MCF 10A (cell line): ENCODE measurements at regions of chr15 and their contacts with region 1.

Region 1: DNA sequence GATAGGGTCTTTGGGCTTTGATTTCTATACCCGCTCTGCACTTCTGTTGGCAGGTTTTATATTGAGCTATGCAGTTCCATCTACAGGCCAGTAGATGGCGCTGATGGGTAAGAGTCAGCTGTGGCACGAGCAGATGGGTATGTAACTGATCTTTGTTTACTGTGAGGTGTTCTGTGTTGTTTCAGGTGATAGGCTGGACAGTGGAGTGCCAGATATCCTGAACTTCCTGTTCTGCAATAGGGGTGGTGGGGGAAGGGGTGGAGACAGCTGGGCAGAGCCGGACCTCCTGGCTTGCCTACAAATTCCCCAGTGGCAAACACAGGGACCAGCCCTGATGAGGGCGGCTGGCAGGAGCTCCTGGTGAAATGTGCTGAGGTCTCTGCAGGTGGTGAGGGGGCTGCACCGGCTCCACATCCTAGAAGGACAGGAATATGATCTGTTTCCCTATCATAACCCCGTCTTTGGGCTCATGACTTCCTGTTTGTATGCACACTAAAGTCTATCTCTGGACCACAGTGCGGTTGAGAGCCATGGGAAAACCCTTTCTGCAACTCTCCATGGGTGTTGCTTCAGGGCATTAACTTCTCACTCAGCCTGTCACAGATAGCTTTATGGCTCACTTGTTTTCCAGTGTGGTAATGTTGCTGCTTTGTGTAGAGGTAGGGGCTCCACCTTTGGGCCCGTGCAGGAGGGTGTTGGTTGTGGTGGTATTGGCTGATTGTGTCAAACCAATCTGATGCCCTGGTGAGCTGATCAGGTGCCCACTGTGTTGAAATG is 13.4 kb upstream of the FAM98B start:
- DNase-seq: peak; percentile 71
- H3K4me3 Mint-ChIP-seq: no peak overlapping the region
- H3K27ac Mint-ChIP-seq: no peak overlapping the region
- H3K4me1 Mint-ChIP-seq: peaks cover 6% of the 10 kb centered on the region
- H3K27me3 Mint-ChIP-seq: peaks cover 47% of the 10 kb centered on the region
- CTCF ChIP-seq: peak; percentile 89

Region 2: GRCh38 chr15:37995461-37996347 is 444.8 kb before region 1 on chr15:
- CTCF ChIA-PET with region 1: interaction called, 12 read pairs
- POLR2A ChIA-PET with region 1: no interaction called
- intact Hi-C with region 1: no loop called
- DNase-seq: peak; percentile 82
- H3K4me3 Mint-ChIP-seq: no peak overlapping the region
- H3K27ac Mint-ChIP-seq: no peak overlapping the region
- H3K4me1 Mint-ChIP-seq: peaks cover 13% of the 10 kb centered on the region
- H3K27me3 Mint-ChIP-seq: peaks cover 26% of the 10 kb centered on the region
- CTCF ChIP-seq: peak; percentile 73

Region 3: DNA sequence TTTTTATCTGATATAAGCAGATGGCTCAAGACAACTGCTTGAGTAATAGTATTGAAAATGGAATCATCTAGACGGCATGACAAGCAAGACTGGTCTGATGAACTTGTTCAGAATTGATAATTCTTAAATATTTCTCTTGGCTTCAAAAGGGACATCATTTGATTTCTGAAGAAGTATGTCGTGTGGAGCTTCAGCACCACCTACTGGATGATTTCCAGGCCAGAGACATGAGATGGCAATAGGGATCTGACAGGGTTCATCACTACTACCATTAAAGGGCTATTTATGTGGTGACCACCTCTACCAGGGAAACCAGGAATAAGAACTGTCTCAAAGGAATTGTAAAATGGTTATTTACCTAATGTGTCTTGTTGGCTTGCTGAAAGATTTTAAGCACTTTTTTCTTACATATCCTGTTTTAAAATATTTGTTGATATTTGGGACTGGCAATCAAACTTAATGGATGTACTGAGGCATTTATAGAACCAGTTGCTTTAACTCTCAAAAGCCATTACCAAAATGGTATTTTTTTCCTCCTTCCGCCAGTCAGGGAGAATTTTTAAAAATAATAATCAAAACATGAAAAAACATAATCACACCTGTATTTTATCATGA is 86.1 kb before region 1 on chr15:
- CTCF ChIA-PET with region 1: no interaction called
- POLR2A ChIA-PET with region 1: no interaction called
- intact Hi-C with region 1: no loop called
- DNase-seq: peak; percentile 78
- H3K4me3 Mint-ChIP-seq: no peak overlapping the region
- H3K27ac Mint-ChIP-seq: no peak overlapping the region
- H3K4me1 Mint-ChIP-seq: no peaks in the 10 kb centered on the region
- H3K27me3 Mint-ChIP-seq: no peaks in the 10 kb centered on the region
- CTCF ChIP-seq: peak; percentile 63

Region 4: DNA sequence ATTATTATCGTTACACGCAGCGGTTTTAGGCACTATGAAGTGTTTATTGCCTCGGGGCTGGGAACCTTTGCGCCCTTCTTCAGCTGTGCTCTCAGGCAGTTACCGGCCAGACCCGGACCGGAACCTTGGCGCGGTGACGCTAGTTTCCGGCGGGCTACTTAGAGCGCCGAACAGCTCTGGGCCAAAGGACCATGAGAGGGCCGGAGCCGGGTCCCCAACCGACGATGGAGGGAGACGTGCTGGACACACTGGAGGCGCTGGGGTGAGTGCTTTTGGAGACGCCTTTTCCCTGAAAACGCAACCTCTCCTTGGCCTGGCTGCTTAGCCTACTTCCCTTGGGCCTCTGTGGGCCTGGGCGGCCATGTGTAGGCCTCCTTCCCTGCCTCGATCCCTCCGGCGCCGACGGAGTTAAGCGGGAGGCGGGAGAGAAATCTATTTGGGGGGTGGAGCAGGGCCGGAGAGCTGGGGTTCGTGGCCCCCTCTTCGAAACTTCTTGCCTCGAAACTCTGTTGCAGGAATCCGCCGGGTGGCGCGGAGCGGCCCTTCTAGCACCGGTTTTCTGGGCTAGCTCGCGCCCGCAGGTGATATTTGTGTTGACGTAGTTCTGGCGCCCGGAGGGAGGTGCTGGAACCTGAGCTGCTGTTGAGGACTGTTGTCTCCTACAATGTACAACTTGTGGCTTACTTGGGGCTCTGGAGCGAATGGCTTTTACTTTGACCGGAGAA is 13.6 kb after region 1 on chr15 and contains the start of gene FAM98B:
- CTCF ChIA-PET with region 1: interaction called, 50 read pairs
- POLR2A ChIA-PET with region 1: interaction called, 15 read pairs
- intact Hi-C with region 1: no loop called
- DNase-seq: peak; percentile 90
- H3K4me3 Mint-ChIP-seq: peak within 1 kb of the TSS; percentile 91
- H3K27ac Mint-ChIP-seq: peak within 1 kb of the TSS; percentile 97
- H3K4me1 Mint-ChIP-seq: peaks cover 20% of the 10 kb centered on the region
- H3K27me3 Mint-ChIP-seq: peaks cover 30% of the 10 kb centered on the region
- CTCF ChIP-seq: no peak
- total RNA-seq, gene FAM98B: 26.5 and 33.1 TPM in 2 replicates

Region 5: GRCh38 chr15:38496151-38496550 is 55.6 kb after region 1 on chr15:
- CTCF ChIA-PET with region 1: interaction called, 10 read pairs
- POLR2A ChIA-PET with region 1: no interaction called
- intact Hi-C with region 1: no loop called
- DNase-seq: no peak
- H3K4me3 Mint-ChIP-seq: no peak overlapping the region
- H3K27ac Mint-ChIP-seq: no peak overlapping the region
- H3K4me1 Mint-ChIP-seq: no peaks in the 10 kb centered on the region
- H3K27me3 Mint-ChIP-seq: no peaks in the 10 kb centered on the region
- CTCF ChIP-seq: no peak

Region 6: GRCh38 chr15:38647683-38648082 is 207.1 kb after region 1 on chr15:
- CTCF ChIA-PET with region 1: interaction called, 32 read pairs
- POLR2A ChIA-PET with region 1: no interaction called
- intact Hi-C with region 1: loop called (anchors 1 kb)
- DNase-seq: peak; percentile 58
- H3K4me3 Mint-ChIP-seq: no peak overlapping the region
- H3K27ac Mint-ChIP-seq: no peak overlapping the region
- H3K4me1 Mint-ChIP-seq: no peaks in the 10 kb centered on the region
- H3K27me3 Mint-ChIP-seq: no peaks in the 10 kb centered on the region
- CTCF ChIP-seq: peak; percentile 61

Region 7: GRCh38 chr15:38699633-38700230 is 259.2 kb after region 1 on chr15:
- CTCF ChIA-PET with region 1: interaction called, 41 read pairs
- POLR2A ChIA-PET with region 1: no interaction called
- intact Hi-C with region 1: loop called (anchors 1 kb)
- DNase-seq: peak; percentile 72
- H3K4me3 Mint-ChIP-seq: no peak overlapping the region
- H3K27ac Mint-ChIP-seq: no peak overlapping the region
- H3K4me1 Mint-ChIP-seq: no peaks in the 10 kb centered on the region
- H3K27me3 Mint-ChIP-seq: no peaks in the 10 kb centered on the region
- CTCF ChIP-seq: peak; percentile 68